ENCODE measurements at regions of chr12 and their contacts with region 1.

Region 1: DNA sequence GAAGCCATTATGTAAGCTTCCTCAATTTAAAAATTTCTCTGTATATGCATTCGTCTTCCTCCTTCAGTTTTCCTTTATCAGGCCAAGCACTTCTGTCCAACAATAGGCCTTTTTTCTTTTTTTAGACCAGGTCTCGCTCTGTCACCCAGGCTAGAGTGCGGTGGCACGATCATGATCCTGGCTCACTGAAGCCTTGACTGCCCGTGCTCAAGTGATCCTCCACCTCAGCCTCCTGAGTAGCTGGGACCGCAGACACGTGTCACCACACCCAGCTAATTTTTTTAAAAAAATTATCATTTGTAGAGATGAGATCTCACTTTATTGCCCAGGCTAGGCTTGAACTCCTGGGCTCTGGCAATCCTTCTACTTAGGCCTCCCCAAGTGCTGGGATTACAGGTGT is 25.8 kb downstream of the TAOK3 start:
- DNase-seq: no peak
- ATAC-seq: no peak
- H3K4me3 ChIP-seq: no peak overlapping the region
- H3K27ac ChIP-seq: no peak overlapping the region
- H3K4me1 ChIP-seq: no peaks in the 10 kb centered on the region; the same call in 1 of the 2 replicates
- H3K27me3 ChIP-seq: no peaks in the 10 kb centered on the region
- CTCF ChIP-seq: no peak

Region 2: DNA sequence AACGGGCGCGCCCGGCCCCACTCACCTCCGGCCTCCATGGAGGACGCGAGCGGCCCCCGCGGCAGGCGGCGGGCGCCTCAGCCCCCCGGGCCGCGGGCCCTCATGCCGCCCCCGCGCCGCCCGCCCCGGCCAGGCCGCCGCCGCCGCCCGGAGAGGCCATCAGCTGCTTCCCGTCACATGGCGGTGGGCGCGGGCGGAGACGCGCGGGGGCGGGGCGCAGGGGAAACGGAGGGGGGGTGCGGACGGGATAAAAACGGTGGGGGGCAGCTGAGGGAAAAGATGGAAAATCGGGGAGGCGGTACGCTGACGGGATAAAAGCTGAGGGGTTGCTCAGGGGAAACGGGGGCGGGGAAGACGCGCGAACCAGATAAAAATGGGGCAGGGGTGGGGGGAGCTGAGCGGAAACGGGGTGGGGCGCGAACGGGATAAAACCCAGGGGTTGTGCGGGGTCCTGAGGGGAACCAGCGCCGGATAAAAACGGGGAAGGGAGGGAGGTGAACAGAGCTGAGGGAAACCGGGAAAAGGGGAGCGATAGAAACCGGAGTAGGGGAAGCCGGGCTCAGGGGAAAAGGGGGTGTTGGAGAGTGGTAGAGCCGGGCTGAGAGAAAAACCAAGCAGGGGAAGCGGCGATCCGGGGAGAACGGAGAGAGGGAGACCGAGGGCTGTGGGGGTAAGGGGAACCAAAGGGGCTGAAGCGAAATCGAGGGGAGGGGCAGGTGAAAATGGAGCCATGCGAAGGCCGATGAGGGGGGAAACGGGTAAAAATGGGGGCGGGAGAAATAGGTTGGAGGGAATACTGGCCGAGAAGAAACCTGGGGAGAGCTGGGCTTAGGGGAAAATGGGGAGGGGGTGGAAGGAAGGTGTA is 285.7 kb before region 1 on chr12 and contains the start of gene WSB2:
- CTCF ChIA-PET with region 1: no interaction called
- POLR2A ChIA-PET with region 1: interaction called, 10 read pairs
- in situ Hi-C with region 1: no loop called
- intact Hi-C with region 1: no loop called
- DNase-seq: no peak
- ATAC-seq: peak; percentile 45
- H3K4me3 ChIP-seq: peak within 1 kb of the TSS; percentile 68 to 88
- H3K27ac ChIP-seq: peak within 1 kb of the TSS; percentile 98
- H3K4me1 ChIP-seq: peaks cover 58% of the 10 kb centered on the region
- H3K27me3 ChIP-seq: no peaks in the 10 kb centered on the region
- CTCF ChIP-seq: no peak
- total RNA-seq, gene WSB2: 193 TPM

Region 3: DNA sequence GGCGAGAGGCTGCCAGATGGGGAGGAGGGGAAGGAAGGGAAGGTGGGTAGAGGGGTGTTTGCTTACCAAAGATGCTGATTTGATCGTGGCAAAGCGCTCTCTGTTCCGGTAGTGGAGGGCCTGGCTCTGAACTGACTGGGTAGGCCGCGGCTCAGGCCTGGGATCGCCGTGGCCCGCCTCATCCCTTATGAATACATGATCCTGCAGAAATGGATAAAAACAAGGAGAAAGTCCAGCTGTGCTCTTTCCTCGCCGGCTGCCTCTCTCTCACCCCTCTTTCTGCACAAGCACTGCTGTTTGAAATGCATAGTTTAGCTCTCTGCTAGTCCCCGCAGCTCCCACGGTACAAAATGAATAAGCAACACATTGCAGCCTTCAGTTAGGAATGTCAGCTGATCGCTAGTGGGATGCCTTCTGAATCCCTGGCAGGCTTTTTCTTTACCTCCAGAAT is 157.1 kb before region 1 on chr12:
- CTCF ChIA-PET with region 1: no interaction called
- POLR2A ChIA-PET with region 1: no interaction called
- in situ Hi-C with region 1: no loop called
- intact Hi-C with region 1: no loop called
- DNase-seq: no peak
- ATAC-seq: no peak
- H3K4me3 ChIP-seq: peak overlapping the region in 1 of 2 experiments; percentile 1; a peak in 1 of 4 replicates
- H3K27ac ChIP-seq: no peak overlapping the region
- H3K4me1 ChIP-seq: no peaks in the 10 kb centered on the region
- H3K27me3 ChIP-seq: no peaks in the 10 kb centered on the region
- CTCF ChIP-seq: no peak

Region 4: DNA sequence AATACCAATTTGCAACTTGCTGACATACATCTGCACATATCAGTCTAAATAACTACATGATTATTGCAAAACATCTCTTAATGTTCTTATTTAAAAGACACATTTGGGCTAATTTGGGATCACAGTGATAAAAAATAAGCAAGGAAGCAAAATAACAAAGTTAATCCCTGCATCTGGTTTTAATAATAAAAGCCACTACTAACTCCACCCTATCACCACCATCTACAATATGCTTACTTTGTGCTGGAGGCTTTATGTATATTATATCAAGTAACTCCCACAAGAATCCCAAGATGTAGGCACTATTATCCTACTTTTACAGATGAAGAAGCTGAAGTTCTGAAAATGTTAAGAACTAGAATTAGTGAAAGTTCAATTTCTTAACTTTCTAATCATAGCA is 19.9 kb before region 1 on chr12:
- CTCF ChIA-PET with region 1: interaction called, 10 read pairs
- POLR2A ChIA-PET with region 1: no interaction called
- in situ Hi-C with region 1: no loop called
- intact Hi-C with region 1: no loop called
- DNase-seq: no peak
- ATAC-seq: no peak
- H3K4me3 ChIP-seq: no peak overlapping the region
- H3K27ac ChIP-seq: no peak overlapping the region
- H3K4me1 ChIP-seq: peaks cover 5% of the 10 kb centered on the region; the same call in 1 of the 2 replicates
- H3K27me3 ChIP-seq: no peaks in the 10 kb centered on the region
- CTCF ChIP-seq: no peak